GM12878 (cell line): ENCODE measurements at regions of chr2 and their contacts with region 1.

Region 1: GRCh38 chr2:231104115-231104713 is 20.6 kb downstream of the HTR2B start:
- DNase-seq: peak; percentile 55
- ATAC-seq: peak; percentile 96
- H3K4me3 ChIP-seq: no peak overlapping the region
- H3K27ac ChIP-seq: no peak overlapping the region
- H3K4me1 ChIP-seq: no peaks in the 10 kb centered on the region
- H3K27me3 ChIP-seq: no peaks in the 10 kb centered on the region
- CTCF ChIP-seq: peak; percentile 74 to 85 (median 81)
- EP300 ChIP-seq: no peak
- POLR2A ChIP-seq: no peak
- RAD21 ChIP-seq: peak; percentile 97

Region 2: GRCh38 chr2:231037731-231038482 is 66.3 kb before region 1 on chr2:
- CTCF ChIA-PET with region 1: no interaction called
- POLR2A ChIA-PET with region 1: no interaction called
- RAD21 ChIA-PET with region 1: no interaction called
- SMC1A ChIA-PET with region 1: no interaction called
- in situ Hi-C with region 1: no loop called
- intact Hi-C with region 1: no loop called
- DNase-seq: no peak
- ATAC-seq: peak; percentile 30; the same call in 2 of the 3 replicates
- H3K4me3 ChIP-seq: peak overlapping the region; percentile 22; the same call in 1 of the 2 replicates
- H3K27ac ChIP-seq: no peak overlapping the region
- H3K4me1 ChIP-seq: peaks cover 3% of the 10 kb centered on the region; the same call in 1 of the 2 replicates
- H3K27me3 ChIP-seq: peaks cover 12 to 14% of the 10 kb centered on the region in 2 experiments
- CTCF ChIP-seq: no peak
- EP300 ChIP-seq: no peak
- POLR2A ChIP-seq: no peak
- RAD21 ChIP-seq: no peak

Region 3: DNA sequence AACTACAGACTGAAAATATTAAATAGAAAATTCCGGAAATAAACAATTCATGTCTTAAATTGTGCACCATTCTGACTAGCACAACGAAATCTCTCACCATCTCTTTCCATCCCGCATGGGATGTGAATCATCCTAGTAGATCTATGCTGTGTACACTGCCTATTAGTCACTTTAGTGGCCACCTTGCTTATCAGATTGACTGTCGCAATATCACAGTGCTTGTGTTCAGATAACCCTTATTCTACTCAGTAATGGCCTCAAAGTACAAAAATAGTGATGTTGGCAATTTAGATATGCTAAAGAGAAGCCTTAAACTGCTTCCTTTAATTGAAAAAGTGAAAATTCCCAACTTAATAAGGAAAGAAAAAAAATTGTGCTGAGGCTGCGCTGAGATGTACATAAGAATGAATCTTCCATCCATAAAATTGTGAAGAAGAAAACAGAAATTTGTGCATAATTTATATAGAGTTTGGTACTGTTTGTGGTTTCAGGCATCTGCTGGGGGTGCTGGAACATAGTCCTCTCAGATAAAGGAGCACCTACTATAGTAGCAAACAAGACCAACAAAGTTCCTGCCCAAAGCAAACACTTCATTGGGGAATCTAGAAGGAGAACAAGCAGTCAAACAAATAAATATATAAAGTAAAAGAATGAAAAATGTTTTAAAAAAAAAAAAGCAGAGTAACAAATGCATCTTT is 35.5 kb before region 1 on chr2:
- CTCF ChIA-PET with region 1: interaction called, 12 read pairs
- POLR2A ChIA-PET with region 1: no interaction called
- RAD21 ChIA-PET with region 1: no interaction called
- SMC1A ChIA-PET with region 1: interaction called, 3 read pairs
- in situ Hi-C with region 1: no loop called
- intact Hi-C with region 1: no loop called
- DNase-seq: no peak
- ATAC-seq: no peak
- H3K4me3 ChIP-seq: no peak overlapping the region
- H3K27ac ChIP-seq: no peak overlapping the region
- H3K4me1 ChIP-seq: no peaks in the 10 kb centered on the region
- H3K27me3 ChIP-seq: no peaks in the 10 kb centered on the region
- CTCF ChIP-seq: no peak
- EP300 ChIP-seq: no peak
- POLR2A ChIP-seq: no peak
- RAD21 ChIP-seq: no peak

Region 4: GRCh38 chr2:231181860-231182512 is 77.8 kb after region 1 on chr2:
- CTCF ChIA-PET with region 1: interaction called, 6 read pairs
- POLR2A ChIA-PET with region 1: no interaction called
- RAD21 ChIA-PET with region 1: interaction called, 4 read pairs
- SMC1A ChIA-PET with region 1: interaction called, 14 read pairs
- in situ Hi-C with region 1: no loop called
- intact Hi-C with region 1: no loop called
- DNase-seq: peak; percentile 52
- ATAC-seq: peak; percentile 75
- H3K4me3 ChIP-seq: peak overlapping the region; percentile 34; the same call in 1 of the 2 replicates
- H3K27ac ChIP-seq: peak overlapping the region; percentile 81
- H3K4me1 ChIP-seq: peaks cover 48% of the 10 kb centered on the region
- H3K27me3 ChIP-seq: no peaks in the 10 kb centered on the region
- CTCF ChIP-seq: no peak
- EP300 ChIP-seq: peak; percentile 23 to 75; a peak in 3 of 4 replicates
- POLR2A ChIP-seq: 0 out of 2 replicates have a peak, but pooled peaks have one; percentile 22
- RAD21 ChIP-seq: no peak

Region 5: DNA sequence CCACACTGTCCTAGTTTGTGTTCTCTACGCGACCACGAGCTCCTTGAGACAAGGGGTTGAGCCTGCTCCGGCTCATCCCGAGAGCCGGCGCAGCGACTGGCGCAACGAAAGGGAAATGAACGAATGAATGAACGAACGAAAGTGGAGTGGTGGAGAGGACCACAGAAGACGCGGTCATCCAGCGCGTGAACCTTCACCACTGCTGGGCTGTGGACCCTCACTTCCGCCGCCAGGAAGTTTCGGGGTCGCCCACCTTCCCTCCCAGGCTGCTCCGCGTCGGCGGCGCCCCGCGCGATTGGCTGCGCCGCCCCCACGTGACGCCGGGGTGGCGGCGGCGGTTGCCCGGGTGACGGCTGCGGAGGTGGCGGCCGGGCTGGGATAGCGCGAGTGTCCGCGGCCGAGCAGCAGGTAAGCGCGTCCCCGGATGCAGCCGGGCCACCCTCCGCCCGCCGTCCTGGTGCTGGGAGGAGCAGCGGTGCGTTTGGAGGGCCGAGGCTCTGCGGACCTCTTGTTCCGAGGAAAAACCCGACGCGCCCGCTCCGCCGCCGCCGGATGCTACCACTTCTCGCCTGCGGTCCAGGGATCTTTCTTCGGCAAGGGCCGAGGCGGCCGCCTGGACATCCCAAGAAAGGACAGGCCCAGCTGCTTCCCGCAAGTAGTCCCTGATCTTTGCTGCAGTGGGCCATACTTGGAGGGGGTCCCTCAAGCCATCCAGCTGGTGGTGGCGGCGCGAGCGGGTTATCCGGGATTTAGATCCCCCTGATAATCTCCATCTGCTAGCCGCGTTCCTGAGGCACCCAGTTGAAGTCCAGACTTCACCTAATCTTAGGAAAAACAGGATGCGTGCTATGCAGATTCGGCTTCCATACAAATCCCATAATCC is 94.3 kb after region 1 on chr2 and contains the start of gene ARMC9:
- CTCF ChIA-PET with region 1: interaction called, 66 read pairs
- POLR2A ChIA-PET with region 1: no interaction called
- RAD21 ChIA-PET with region 1: interaction called, 29 read pairs
- SMC1A ChIA-PET with region 1: interaction called, 4 read pairs
- in situ Hi-C with region 1: no loop called
- intact Hi-C with region 1: loop called (anchors 10 kb)
- DNase-seq: peak; percentile 38
- ATAC-seq: peak; percentile 99
- H3K4me3 ChIP-seq: peak within 1 kb of the TSS; percentile 97
- H3K27ac ChIP-seq: peak within 1 kb of the TSS; percentile 78
- H3K4me1 ChIP-seq: peaks cover 6% of the 10 kb centered on the region
- H3K27me3 ChIP-seq: no peaks in the 10 kb centered on the region
- CTCF ChIP-seq: no peak
- EP300 ChIP-seq: no peak
- POLR2A ChIP-seq: peak; percentile 92
- RAD21 ChIP-seq: 0 out of 2 replicates have a peak, but pooled peaks have one; percentile 6
- polyA plus RNA-seq, gene ARMC9: 3.8 to 6.5 TPM

Region 6: GRCh38 chr2:231227309-231228162 is 123.3 kb after region 1 on chr2:
- CTCF ChIA-PET with region 1: interaction called, 75 read pairs
- POLR2A ChIA-PET with region 1: no interaction called
- RAD21 ChIA-PET with region 1: interaction called, 47 read pairs
- SMC1A ChIA-PET with region 1: interaction called, 54 read pairs
- in situ Hi-C with region 1: no loop called
- intact Hi-C with region 1: loop called (anchors 2 kb)
- DNase-seq: peak; percentile 70
- ATAC-seq: peak; percentile 80
- H3K4me3 ChIP-seq: no peak overlapping the region
- H3K27ac ChIP-seq: peak overlapping the region; percentile 80
- H3K4me1 ChIP-seq: peaks cover 29% of the 10 kb centered on the region
- H3K27me3 ChIP-seq: no peaks in the 10 kb centered on the region
- CTCF ChIP-seq: peak; percentile 82 to 90 (median 89)
- EP300 ChIP-seq: no peak
- POLR2A ChIP-seq: no peak; the same call in 1 of the 2 replicates
- RAD21 ChIP-seq: peak; percentile 93

Region 7: GRCh38 chr2:231394211-231395141 is 290.3 kb after region 1 on chr2:
- CTCF ChIA-PET with region 1: interaction called, 37 read pairs
- POLR2A ChIA-PET with region 1: no interaction called
- RAD21 ChIA-PET with region 1: interaction called, 11 read pairs
- SMC1A ChIA-PET with region 1: interaction called, 12 read pairs
- in situ Hi-C with region 1: no loop called
- intact Hi-C with region 1: no loop called
- DNase-seq: peak; percentile 87
- ATAC-seq: peak; percentile 66
- H3K4me3 ChIP-seq: peak overlapping the region; percentile 65
- H3K27ac ChIP-seq: peak overlapping the region; percentile 95
- H3K4me1 ChIP-seq: peaks cover 58% of the 10 kb centered on the region
- H3K27me3 ChIP-seq: no peaks in the 10 kb centered on the region
- CTCF ChIP-seq: peak; percentile 52 to 67 (median 61)
- EP300 ChIP-seq: peak in 1 of 2 experiments; percentile 53; a peak in 1 of 4 replicates
- POLR2A ChIP-seq: peak; percentile 76
- RAD21 ChIP-seq: peak; percentile 47

Region 8: GRCh38 chr2:231411831-231412617 is 307.8 kb after region 1 on chr2:
- CTCF ChIA-PET with region 1: interaction called, 114 read pairs
- POLR2A ChIA-PET with region 1: no interaction called
- RAD21 ChIA-PET with region 1: interaction called, 26 read pairs
- SMC1A ChIA-PET with region 1: interaction called, 44 read pairs
- in situ Hi-C with region 1: loop called (anchors 5 kb)
- intact Hi-C with region 1: loop called (anchors 2 kb)
- DNase-seq: no peak
- ATAC-seq: peak; percentile 100
- H3K4me3 ChIP-seq: peak overlapping the region; percentile 66
- H3K27ac ChIP-seq: no peak overlapping the region
- H3K4me1 ChIP-seq: no peaks in the 10 kb centered on the region
- H3K27me3 ChIP-seq: no peaks in the 10 kb centered on the region
- CTCF ChIP-seq: peak; percentile 72 to 95 (median 94)
- EP300 ChIP-seq: no peak
- POLR2A ChIP-seq: no peak
- RAD21 ChIP-seq: peak; percentile 87